Transverse colon (tissue), 4 donors: ENCODE measurements at regions of chr6 and their contacts with region 1.

Region 1: DNA sequence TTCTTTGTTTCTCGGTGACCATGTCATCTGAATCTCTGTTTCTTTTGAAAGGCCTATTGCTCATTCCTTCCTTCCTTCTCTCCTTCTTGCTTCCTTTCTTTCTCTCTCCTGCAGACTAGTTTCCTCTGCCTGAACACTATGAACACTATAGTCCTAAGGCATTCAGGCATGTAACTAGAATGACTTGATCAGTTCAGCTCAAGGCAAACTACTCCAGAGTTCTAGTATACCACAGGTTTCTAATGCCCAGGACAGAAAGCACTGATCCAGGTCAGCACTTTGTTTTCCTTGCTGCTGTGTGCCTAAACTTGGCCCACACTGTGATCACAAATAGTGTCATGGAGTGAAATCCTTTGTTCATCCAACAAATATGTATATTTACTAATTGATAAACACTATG is 324.1 kb upstream of the GJE1 start:
- DNase-seq: no peak
- H3K4me3 ChIP-seq: no peak overlapping the region
- H3K27ac ChIP-seq: no peak overlapping the region
- H3K4me1 ChIP-seq: no peaks in the 10 kb centered on the region
- H3K27me3 ChIP-seq: no peaks in the 10 kb centered on the region
- CTCF ChIP-seq: no peak
- EP300 ChIP-seq: no peak
- POLR2A ChIP-seq: no peak

Region 2: DNA sequence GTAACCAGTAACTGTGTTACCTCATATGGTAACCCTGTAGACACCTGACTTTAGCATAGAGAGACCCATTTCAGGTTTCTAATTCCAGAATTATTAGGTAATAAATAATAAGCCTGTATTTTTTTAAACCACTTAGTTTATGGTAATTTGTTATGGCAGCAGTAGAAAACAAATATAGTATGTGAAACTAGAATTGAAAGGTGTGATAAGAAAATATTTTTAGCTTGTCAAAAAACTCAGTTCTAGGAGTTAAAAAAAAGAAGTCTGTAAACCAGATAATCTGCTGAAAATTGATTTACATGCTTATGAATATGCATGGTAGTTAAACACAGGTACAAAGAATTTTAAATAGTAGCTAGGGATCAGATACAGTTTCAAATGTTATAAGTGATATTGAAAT is 371.0 kb before region 1 on chr6:
- in situ Hi-C with region 1: no loop called
- intact Hi-C with region 1: no loop called
- DNase-seq: no peak
- H3K4me3 ChIP-seq: no peak overlapping the region
- H3K27ac ChIP-seq: no peak overlapping the region
- H3K4me1 ChIP-seq: no peaks in the 10 kb centered on the region
- H3K27me3 ChIP-seq: no peaks in the 10 kb centered on the region
- CTCF ChIP-seq: no peak
- EP300 ChIP-seq: no peak
- POLR2A ChIP-seq: no peak

Region 3: GRCh38 chr6:141744971-141745370 is 63.7 kb before region 1 on chr6:
- in situ Hi-C with region 1: no loop called
- intact Hi-C with region 1: loop called (anchors 2 kb)
- DNase-seq: no peak
- H3K4me3 ChIP-seq: no peak overlapping the region
- H3K27ac ChIP-seq: no peak overlapping the region
- H3K4me1 ChIP-seq: no peaks in the 10 kb centered on the region
- H3K27me3 ChIP-seq: no peaks in the 10 kb centered on the region
- CTCF ChIP-seq: no peak
- EP300 ChIP-seq: no peak
- POLR2A ChIP-seq: no peak